Adrenal gland (tissue), 19 donors: ENCODE measurements at regions of chr2 and their contacts with region 1.

Region 1: GRCh38 chr2:39436592-39437510 is at the start of gene MAP4K3:
- DNase-seq: peak; percentile 92 to 96 (median 95)
- H3K4me3 ChIP-seq: peak within 1 kb of the TSS; percentile 44 to 95 (median 74)
- H3K27ac ChIP-seq: peak within 1 kb of the TSS; percentile 19 to 96 (median 90)
- H3K4me1 ChIP-seq: peaks cover 40 to 67% of the 10 kb centered on the region in 2 donors
- H3K27me3 ChIP-seq: no peaks in the 10 kb centered on the region
- CTCF ChIP-seq: no peak
- POLR2A ChIP-seq: peak; percentile 52 to 84
- total RNA-seq, gene MAP4K3: 27.3 to 79.7 (median 48.8) TPM

Region 2: GRCh38 chr2:39379643-39380524 is 57.0 kb before region 1 on chr2:
- intact Hi-C with region 1: loop called in 1 of 2 experiments (anchors 10 kb)
- DNase-seq: peak in 2 of 7 donors; percentile 22 to 33
- H3K4me3 ChIP-seq: no peak overlapping the region
- H3K27ac ChIP-seq: peak overlapping the region in 4 of 5 donors; percentile 21 to 48 (median 46)
- H3K4me1 ChIP-seq: peaks cover 27 to 54% of the 10 kb centered on the region in 2 donors
- H3K27me3 ChIP-seq: no peaks in the 10 kb centered on the region
- CTCF ChIP-seq: peak; percentile 35 to 73 (median 65)
- POLR2A ChIP-seq: no peak

Region 3: GRCh38 chr2:39488450-39488849 is 51.6 kb after region 1 on chr2:
- intact Hi-C with region 1: loop called in 1 of 2 experiments (anchors 10 kb)
- DNase-seq: peak; percentile 68 to 91 (median 85)
- H3K4me3 ChIP-seq: no peak overlapping the region
- H3K27ac ChIP-seq: peak overlapping the region in 4 of 5 donors; percentile 30 to 62 (median 54)
- H3K4me1 ChIP-seq: peaks cover 24 to 50% of the 10 kb centered on the region in 2 donors
- H3K27me3 ChIP-seq: no peaks in the 10 kb centered on the region
- CTCF ChIP-seq: no peak
- POLR2A ChIP-seq: no peak